ENCODE measurements at regions of chr1 and their contacts with region 1.

Region 1: DNA sequence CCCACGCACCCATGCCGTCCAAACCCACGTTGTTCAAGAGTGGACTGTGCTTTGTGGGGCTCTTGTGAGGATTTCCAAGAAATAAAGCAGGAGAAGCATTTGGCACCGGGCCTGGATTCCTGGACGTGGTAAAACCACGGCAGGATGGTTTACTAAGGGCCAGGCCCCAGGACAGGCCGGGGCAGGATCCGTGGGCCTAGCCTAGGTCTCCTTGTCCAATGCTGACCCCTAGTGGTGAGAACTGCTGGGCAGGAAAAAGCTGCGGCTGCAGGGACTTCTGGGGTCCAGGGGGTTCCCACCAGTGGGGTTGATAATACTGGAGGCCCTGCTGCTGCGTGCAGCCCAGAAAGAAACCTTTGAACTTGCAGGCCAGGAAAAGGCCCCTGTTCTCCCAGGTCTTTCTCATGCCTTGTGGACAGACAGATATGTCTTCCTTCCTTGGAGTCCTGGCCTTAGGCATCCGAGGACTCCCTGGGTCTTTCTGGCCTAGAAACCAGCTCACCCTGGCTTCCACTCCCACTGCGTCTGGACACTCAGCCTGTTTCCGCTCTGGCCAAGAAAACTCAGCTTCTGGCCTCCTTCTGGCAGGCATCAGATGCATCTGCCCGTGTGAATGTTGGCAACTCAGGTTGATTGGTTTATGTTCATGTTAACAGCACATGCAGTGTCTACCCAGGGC is 106.9 kb upstream of the TMEM51 start:
- DNase-seq: peak; percentile 35 to 87
- H3K4me3 ChIP-seq: no peak overlapping the region
- H3K4me1 ChIP-seq: no peaks in the 10 kb centered on the region
- H3K27me3 ChIP-seq: no peaks in the 10 kb centered on the region

Region 2: DNA sequence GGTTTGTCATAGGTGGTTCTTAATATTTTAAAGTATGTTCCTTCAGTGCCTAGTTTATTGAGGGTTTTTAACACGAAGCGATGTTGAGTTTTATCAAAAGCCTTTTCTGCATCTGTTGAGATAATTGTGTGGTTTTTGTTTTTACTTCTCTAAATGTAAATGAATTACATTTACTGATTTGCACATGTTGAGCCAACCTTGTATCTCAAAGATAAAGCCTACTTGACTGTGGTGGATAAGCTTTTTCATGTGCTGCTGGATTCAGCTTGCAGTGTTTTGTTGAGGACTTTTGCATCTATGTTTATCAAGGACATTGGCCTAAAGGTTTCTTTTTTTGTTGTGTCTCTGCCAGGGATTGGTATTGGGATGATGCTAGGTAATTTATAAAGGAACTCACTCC is 1204.1 kb before region 1 on chr1:
- in situ Hi-C with region 1: no loop called
- DNase-seq: no peak
- H3K4me3 ChIP-seq: no peak overlapping the region
- H3K4me1 ChIP-seq: no peaks in the 10 kb centered on the region
- H3K27me3 ChIP-seq: no peaks in the 10 kb centered on the region

Region 3: DNA sequence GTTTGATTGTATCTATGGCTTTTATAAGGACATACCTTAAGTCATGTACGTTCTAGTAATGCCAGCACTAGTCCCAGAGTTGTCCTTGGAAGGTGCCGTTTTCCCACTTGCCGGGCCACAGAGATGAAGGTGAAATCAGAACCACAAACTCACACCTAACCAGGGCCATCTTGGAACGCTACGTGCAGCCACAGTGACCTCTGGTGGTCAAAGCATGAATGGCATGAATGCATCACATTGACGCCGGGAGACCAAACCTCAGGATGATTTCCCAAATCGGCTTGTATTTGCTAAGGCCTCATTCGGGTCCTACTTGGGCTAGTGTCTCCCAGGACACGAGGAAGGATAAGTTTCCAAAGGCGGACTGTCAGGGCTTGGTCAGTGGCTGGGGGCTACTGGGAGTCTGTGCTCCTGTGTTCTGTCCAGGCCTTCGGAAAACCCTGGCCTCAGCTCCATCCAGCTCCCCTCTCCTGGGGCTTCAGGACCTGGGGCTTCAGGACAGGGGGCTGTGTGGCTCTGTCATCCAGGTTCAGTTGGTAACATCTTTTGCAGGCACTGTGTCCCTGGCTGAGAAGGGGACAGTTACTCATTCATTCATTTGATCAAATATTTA is 1086.1 kb before region 1 on chr1:
- in situ Hi-C with region 1: loop called (anchors 25 kb)
- DNase-seq: peak; percentile 36 to 77
- H3K4me3 ChIP-seq: no peak overlapping the region
- H3K4me1 ChIP-seq: no peaks in the 10 kb centered on the region
- H3K27me3 ChIP-seq: 0 out of 2 replicates have a peak, but pooled peaks cover 5% of the 10 kb centered on the region

Region 4: DNA sequence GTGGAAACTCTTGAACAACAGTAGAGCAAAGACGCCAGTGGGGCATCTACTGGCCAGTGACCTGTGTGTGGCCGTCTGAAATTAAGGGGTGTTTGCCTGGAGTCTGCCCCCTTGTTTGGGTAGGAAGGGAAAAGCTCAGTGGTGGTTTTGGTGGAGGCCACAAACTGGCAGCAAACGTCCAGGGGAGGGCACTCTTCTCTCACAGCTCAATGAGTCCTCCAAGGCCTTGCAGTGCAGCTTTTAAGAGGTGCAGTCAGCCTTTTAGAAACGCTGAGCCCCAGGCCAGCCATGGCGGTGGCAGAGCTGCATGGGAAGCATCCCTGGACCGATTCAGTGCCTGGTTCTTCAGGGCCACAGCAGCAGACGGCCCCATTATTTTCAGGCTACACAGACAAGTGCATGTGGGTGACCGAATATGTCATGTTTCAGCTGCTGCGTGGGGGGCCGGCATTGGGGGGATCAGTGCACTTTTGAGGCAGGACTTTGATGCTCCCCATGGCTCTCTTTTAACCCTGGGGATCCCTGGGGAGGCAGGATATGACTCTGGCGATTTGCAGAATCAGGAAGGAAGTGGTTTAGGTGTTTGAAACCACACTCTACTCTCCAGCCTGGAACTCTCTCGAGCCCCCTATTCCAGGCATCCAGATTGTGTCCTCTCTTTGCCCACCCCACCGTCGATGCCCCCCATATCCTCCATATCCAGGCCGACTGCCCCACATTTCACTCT is 932.6 kb before region 1 on chr1:
- in situ Hi-C with region 1: loop called (anchors 25 kb)
- DNase-seq: peak; percentile 6 to 53
- H3K4me3 ChIP-seq: no peak overlapping the region
- H3K4me1 ChIP-seq: no peaks in the 10 kb centered on the region
- H3K27me3 ChIP-seq: no peaks in the 10 kb centered on the region

Region 5: DNA sequence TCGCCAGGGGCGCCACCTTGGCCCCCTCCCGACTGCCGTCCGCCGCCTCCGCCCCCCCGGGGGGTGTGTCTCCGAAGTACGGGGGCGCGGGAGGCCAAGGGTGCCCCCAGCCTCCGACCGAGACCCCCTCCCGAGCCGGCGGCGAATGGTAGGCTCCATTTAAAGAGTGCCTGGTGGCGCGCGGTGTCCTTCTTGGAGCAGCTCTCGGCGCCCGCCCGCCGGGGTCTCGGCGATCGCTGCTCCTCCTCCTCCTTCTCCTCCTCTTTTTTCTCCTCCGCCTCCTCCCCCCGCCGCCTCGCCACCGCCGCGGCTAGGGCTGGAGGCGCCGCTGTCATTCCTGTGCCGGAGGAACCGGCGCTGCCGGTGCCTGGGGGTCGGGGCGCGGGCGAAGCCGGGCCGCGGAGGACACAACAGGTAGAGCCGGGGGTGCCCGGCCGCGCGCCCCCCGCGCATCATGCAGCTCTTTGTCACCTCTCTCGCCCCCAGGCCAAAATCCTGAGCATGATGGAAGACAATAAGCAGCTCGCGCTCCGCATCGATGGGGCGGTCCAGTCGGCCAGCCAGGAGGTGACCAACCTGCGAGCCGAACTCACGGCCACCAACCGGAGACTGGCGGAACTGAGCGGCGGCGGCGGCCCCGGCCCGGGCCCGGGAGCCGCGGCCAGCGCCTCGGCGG is 448.0 kb before region 1 on chr1 and contains the start of gene KAZN:
- in situ Hi-C with region 1: loop called (anchors 25 kb)
- DNase-seq: peak; percentile 66 to 83
- H3K4me3 ChIP-seq: peak within 1 kb of the TSS; percentile 53
- H3K4me1 ChIP-seq: peaks cover 26% of the 10 kb centered on the region
- H3K27me3 ChIP-seq: no peaks in the 10 kb centered on the region

Region 6: DNA sequence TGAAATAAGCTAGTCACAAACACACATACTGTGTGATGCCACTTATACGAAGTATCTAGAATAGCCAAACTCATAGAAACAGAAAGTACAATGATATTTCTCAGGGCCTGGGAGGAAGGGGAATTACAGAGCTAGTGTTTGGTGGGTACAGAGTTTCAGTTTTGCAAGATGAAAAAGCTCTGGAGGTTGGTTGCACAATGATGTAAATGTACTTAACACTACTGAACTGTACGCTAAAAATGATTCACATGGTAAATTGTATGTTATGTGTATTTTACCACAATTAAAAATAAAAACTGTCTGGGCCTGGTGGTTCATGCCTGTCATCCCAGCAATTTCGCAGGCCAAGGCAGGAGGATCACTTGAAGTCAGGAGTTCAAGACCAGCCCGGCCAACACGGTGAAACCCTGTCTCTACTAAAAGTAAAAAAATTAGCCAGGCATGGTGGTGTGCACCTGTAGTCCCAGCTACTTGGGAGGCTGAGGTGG is 185.1 kb after region 1 on chr1:
- in situ Hi-C with region 1: no loop called
- DNase-seq: no peak
- H3K4me3 ChIP-seq: no peak overlapping the region
- H3K4me1 ChIP-seq: no peaks in the 10 kb centered on the region
- H3K27me3 ChIP-seq: no peaks in the 10 kb centered on the region